ENCODE measurements at regions of chr1 and their contacts with region 1.

Region 1: GRCh38 chr1:157156058-157156541 is 17.9 kb upstream of the ETV3 start:
- DNase-seq: peak; percentile 43 to 91 (median 70)
- ATAC-seq: peak; percentile 81 to 86 (median 84)
- H3K4me3 ChIP-seq: no peak overlapping the region
- H3K27ac ChIP-seq: no peak overlapping the region
- H3K4me1 ChIP-seq: peaks cover 0 to 21% (median 4%) of the 10 kb centered on the region in 3 donors
- H3K27me3 ChIP-seq: no peaks in the 10 kb centered on the region
- CTCF ChIP-seq: peak; percentile 94 to 97 (median 96)

Region 2: DNA sequence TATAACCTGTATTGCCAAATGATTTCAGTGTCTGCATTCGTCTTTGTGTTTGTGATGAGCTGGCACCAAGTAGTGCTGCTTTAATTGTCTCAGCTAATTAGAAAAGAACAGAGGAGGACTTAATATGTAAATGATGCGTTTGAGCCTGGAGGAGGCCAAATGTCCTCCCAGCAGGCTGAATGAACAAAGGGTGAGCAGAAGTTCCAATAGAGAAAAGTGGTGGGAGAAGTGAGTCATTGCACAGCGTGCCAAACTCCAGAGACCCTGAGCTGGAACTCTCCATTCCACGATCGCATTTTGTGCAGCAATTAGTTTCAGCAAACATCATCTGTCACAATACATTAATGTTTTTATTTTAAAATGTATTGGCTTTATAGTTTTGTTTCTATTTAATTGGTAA is 74.4 kb before region 1 on chr1:
- intact Hi-C with region 1: loop called in 1 of 3 experiments (anchors 5 kb)
- DNase-seq: no peak
- ATAC-seq: no peak
- H3K4me3 ChIP-seq: no peak overlapping the region
- H3K27ac ChIP-seq: no peak overlapping the region
- H3K4me1 ChIP-seq: no peaks in the 10 kb centered on the region
- H3K27me3 ChIP-seq: no peaks in the 10 kb centered on the region
- CTCF ChIP-seq: no peak

Region 3: DNA sequence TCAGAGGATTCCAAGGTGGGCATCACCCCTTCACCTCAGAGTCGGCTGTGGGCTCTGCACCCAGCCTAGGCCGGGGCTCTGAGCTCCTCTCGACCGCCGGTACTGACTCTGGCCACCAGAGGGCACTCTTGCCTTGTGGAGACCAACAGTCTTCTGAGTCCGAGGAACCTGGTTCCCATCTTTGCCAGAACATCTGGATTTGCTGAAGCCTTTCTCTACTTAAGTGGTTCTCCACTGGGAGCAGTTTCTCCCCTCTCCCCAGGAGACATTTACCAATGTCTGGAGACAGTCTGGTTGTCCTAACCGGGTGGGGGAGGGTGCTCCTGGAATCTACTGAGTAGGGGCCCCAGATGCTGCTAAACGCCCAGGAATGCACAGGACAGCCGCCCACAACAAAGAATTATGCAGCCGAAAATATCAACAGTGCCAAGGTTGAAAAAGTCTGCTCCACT is 65.9 kb before region 1 on chr1:
- intact Hi-C with region 1: loop called in 2 of 3 experiments (anchors 2 to 5 kb)
- DNase-seq: peak; percentile 62 to 97 (median 88)
- ATAC-seq: peak; percentile 75 to 98 (median 94)
- H3K4me3 ChIP-seq: no peak overlapping the region
- H3K27ac ChIP-seq: no peak overlapping the region
- H3K4me1 ChIP-seq: no peaks in the 10 kb centered on the region
- H3K27me3 ChIP-seq: no peaks in the 10 kb centered on the region
- CTCF ChIP-seq: peak; percentile 94 to 96 (median 96)

Region 4: GRCh38 chr1:157262422-157262821 is 106.3 kb after region 1 on chr1:
- intact Hi-C with region 1: no loop called
- DNase-seq: no peak
- ATAC-seq: no peak
- H3K4me3 ChIP-seq: no peak overlapping the region
- H3K27ac ChIP-seq: no peak overlapping the region
- H3K4me1 ChIP-seq: no peaks in the 10 kb centered on the region
- H3K27me3 ChIP-seq: no peaks in the 10 kb centered on the region
- CTCF ChIP-seq: no peak

Region 5: GRCh38 chr1:157363660-157364140 is 207.6 kb after region 1 on chr1:
- intact Hi-C with region 1: no loop called
- DNase-seq: peak in 5 of 6 donors; percentile 23 to 74 (median 50)
- ATAC-seq: peak; percentile 85 to 99 (median 94)
- H3K4me3 ChIP-seq: no peak overlapping the region
- H3K27ac ChIP-seq: no peak overlapping the region
- H3K4me1 ChIP-seq: no peaks in the 10 kb centered on the region
- H3K27me3 ChIP-seq: no peaks in the 10 kb centered on the region
- CTCF ChIP-seq: peak; percentile 31 to 51 (median 50)

Region 6: GRCh38 chr1:157704878-157705277 is 548.8 kb after region 1 on chr1:
- intact Hi-C with region 1: no loop called
- DNase-seq: no peak
- ATAC-seq: no peak
- H3K4me3 ChIP-seq: no peak overlapping the region
- H3K27ac ChIP-seq: no peak overlapping the region
- H3K4me1 ChIP-seq: no peaks in the 10 kb centered on the region
- H3K27me3 ChIP-seq: no peaks in the 10 kb centered on the region
- CTCF ChIP-seq: no peak